GM10248 (cell line): ENCODE measurements at regions of chr1 and their contacts with region 1.

Region 1: GRCh38 chr1:154335025-154335714 is 9.8 kb downstream of the ATP8B2 start:
- DNase-seq: peak; percentile 90
- CTCF ChIP-seq: peak; percentile 76

Region 2: GRCh38 chr1:154198756-154199562 is 136.2 kb before region 1 on chr1:
- CTCF ChIA-PET with region 1: interaction called, 30 read pairs
- POLR2A ChIA-PET with region 1: no interaction called
- DNase-seq: peak; percentile 53
- CTCF ChIP-seq: peak; percentile 64

Region 3: GRCh38 chr1:154324669-154325582 is 10.2 kb before region 1 on chr1 and contains the start of gene ATP8B2:
- CTCF ChIA-PET with region 1: interaction called, 120 read pairs
- POLR2A ChIA-PET with region 1: interaction called, 5 read pairs
- DNase-seq: peak; percentile 90
- CTCF ChIP-seq: peak; percentile 82

Region 4: GRCh38 chr1:154371436-154371835 is 36.3 kb after region 1 on chr1:
- CTCF ChIA-PET with region 1: interaction called, 20 read pairs
- POLR2A ChIA-PET with region 1: no interaction called
- DNase-seq: no peak
- CTCF ChIP-seq: no peak

Region 5: GRCh38 chr1:154463512-154463990 is 128.4 kb after region 1 on chr1:
- CTCF ChIA-PET with region 1: interaction called, 12 read pairs
- POLR2A ChIA-PET with region 1: no interaction called
- DNase-seq: no peak
- CTCF ChIP-seq: no peak

Region 6: DNA sequence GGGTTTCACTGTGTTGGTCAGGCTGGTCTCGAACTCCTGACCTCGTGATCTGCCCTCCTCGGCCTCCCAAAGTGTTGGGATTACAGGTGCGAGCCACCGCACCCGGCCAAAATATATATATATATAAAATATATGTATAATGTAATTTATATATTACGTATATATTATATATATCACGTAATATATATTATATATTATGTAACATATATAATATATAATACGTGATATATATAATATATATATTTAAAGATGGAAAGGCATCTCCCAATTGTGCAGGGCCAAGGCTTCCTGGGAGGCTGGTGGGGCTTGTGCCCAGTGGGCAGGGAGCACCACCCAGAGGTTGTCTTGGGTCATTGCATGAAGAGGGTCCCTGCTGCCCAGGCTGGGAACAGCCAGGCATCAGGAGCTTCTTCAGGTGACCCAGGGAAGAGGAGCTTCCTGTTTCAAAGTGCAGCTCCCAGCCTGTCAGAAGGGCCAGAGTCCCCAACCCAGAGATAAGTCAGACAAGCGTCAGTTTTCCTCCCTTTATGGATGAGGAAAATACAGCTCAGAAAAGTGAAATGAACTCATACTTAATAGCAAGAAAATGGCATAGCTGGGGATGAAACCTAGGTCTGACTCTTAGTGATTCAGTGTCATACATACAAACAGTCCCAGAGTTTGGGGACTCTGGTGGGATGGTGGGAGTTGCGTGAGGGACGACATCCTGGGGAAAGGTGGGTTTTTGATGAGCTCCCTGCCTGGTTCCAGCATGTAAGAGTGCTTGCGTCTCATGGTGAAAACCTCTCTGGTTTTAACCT is 211.3 kb after region 1 on chr1:
- CTCF ChIA-PET with region 1: interaction called, 17 read pairs
- POLR2A ChIA-PET with region 1: no interaction called
- DNase-seq: peak; percentile 82
- CTCF ChIP-seq: peak; percentile 89